Activated CD4-positive, alpha-beta T cell treated with anti-CD3 and anti-CD28 coated beads for 36 hours (primary cell): ENCODE measurements at regions of chr11 and their contacts with region 1.

Region 1: DNA sequence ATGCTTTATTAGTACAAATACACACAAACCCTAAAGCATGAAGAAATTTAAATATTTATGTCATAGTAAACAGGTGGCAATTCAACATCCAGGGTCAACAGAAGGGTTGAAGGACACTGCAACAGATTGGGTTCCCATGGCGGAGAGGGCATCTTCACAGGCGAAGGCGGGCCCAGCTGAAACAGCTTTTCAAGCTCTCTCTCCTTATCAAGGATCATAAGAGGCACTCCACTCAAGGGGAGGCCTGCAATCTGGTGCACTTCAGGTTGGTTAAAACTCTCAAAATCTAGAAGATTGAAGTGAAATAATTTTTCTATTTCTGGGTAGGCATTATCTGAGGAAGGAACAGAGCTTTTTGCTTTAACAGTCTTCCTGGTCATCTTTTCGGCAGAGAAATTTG is 16.8 kb upstream of the SLC22A8 start:
- DNase-seq: no peak
- ATAC-seq: no peak
- H3K4me3 Mint-ChIP-seq: no peak overlapping the region
- H3K27ac Mint-ChIP-seq: no peak overlapping the region
- H3K4me1 Mint-ChIP-seq: peaks cover 2% of the 10 kb centered on the region
- H3K27me3 Mint-ChIP-seq: peaks cover 25% of the 10 kb centered on the region

Region 2: GRCh38 chr11:62980133-62980760 is 52.2 kb before region 1 on chr11:
- CTCF ChIA-PET with region 1: no interaction called
- POLR2A ChIA-PET with region 1: no interaction called
- intact Hi-C with region 1: no loop called
- DNase-seq: peak; percentile 24
- ATAC-seq: no peak
- H3K4me3 Mint-ChIP-seq: no peak overlapping the region
- H3K27ac Mint-ChIP-seq: no peak overlapping the region
- H3K4me1 Mint-ChIP-seq: no peaks in the 10 kb centered on the region
- H3K27me3 Mint-ChIP-seq: peaks cover 6% of the 10 kb centered on the region

Region 3: GRCh38 chr11:63212742-63213141 is 180.3 kb after region 1 on chr11:
- CTCF ChIA-PET with region 1: interaction called, 9 read pairs
- POLR2A ChIA-PET with region 1: no interaction called
- intact Hi-C with region 1: loop called (anchors 1 kb)
- DNase-seq: peak; percentile 26
- ATAC-seq: no peak
- H3K4me3 Mint-ChIP-seq: no peak overlapping the region
- H3K27ac Mint-ChIP-seq: no peak overlapping the region
- H3K4me1 Mint-ChIP-seq: no peaks in the 10 kb centered on the region
- H3K27me3 Mint-ChIP-seq: peaks cover 19% of the 10 kb centered on the region